CD4-positive, alpha-beta T cell (primary cell): ENCODE measurements at regions of chr10 and their contacts with region 1.

Region 1: DNA sequence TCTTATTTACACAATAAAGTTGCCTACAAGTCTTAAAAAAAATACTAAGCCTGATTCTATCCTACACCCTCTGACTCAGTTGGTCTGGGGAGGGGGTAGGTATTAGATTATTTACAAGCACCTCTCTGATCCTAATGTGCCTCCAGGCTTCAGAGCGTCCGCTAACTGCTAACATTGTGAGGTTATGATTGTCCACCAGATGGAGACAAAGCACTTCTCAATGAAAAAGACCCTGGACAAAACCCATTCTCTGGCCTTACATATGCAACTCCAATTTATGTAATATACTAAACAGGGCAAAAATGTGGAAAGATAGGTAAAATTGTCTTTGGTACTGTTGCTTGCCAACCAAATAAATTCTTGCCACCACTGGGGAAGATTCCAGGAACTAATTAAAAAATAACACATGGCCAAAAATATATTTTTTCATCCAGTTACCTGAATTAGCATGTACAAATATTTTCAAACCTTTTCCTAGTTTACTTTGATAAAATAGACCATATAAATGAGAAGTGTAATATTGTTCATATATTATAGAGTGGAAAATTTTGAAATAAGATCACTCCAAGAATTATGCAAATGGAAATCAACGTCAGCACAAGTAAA is 92.4 kb downstream of the KIF20B start:
- DNase-seq: peak in 8 of 14 experiments; percentile 5 to 77 (median 27)
- ATAC-seq: peak; percentile 52
- H3K4me3 ChIP-seq: no peak overlapping the region
- H3K4me3 Mint-ChIP-seq: no peak overlapping the region
- H3K27ac ChIP-seq: no peak overlapping the region
- H3K27ac Mint-ChIP-seq: no peak overlapping the region
- H3K4me1 ChIP-seq: no peaks in the 10 kb centered on the region
- H3K4me1 Mint-ChIP-seq: no peaks in the 10 kb centered on the region
- H3K27me3 ChIP-seq: peaks cover 0 to 4% of the 10 kb centered on the region in 2 experiments
- H3K27me3 Mint-ChIP-seq: peaks cover 22% of the 10 kb centered on the region
- CTCF ChIP-seq: peak; percentile 85

Region 2: GRCh38 chr10:90592638-90593302 is 799.0 kb after region 1 on chr10:
- CTCF ChIA-PET with region 1: no interaction called
- POLR2A ChIA-PET with region 1: no interaction called
- intact Hi-C with region 1: loop called in 1 of 2 experiments (anchors 10 kb)
- DNase-seq: peak in 1 of 14 experiments; percentile 2
- ATAC-seq: no peak
- H3K4me3 ChIP-seq: no peak overlapping the region
- H3K4me3 Mint-ChIP-seq: no peak overlapping the region
- H3K27ac ChIP-seq: no peak overlapping the region
- H3K27ac Mint-ChIP-seq: no peak overlapping the region
- H3K4me1 ChIP-seq: no peaks in the 10 kb centered on the region
- H3K4me1 Mint-ChIP-seq: no peaks in the 10 kb centered on the region
- H3K27me3 ChIP-seq: no peaks in the 10 kb centered on the region
- H3K27me3 Mint-ChIP-seq: peaks cover 22% of the 10 kb centered on the region
- CTCF ChIP-seq: no peak

Region 3: DNA sequence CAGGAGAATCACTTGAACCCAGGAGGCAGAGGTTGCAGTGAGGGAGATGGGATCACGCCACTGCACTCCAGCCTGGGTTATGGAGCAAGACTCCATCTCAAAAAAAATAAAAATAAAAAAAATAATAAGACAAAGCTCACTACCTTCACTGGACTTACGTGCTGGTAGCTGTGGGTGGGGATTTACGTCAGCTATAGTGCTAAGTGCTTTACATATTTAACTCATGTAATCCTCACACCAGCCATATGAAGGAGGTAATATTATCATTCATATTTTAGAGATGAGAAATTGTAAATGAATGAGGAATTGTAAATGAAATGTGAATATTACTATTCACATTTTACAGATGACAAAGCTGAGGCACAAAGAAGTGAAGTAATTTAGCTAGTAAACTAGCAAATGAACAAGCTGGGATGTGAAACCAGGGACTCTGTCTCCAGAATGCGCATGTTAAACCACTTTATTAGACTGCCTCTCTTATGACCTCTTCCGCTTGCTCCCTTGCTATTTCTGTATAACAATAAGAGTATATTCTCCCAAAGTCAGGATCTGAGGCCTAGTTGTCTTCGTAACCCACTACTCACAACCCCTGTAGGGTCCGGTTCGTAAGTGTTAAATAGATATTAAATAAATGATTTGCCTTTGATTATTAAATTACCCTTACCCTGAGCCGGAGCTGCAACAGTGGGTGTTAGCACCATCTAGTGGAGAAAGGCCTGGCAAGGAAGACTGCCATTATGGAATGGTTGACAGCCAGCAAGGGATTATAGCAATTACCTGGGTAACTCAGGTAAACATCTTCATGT is 993.8 kb after region 1 on chr10:
- CTCF ChIA-PET with region 1: interaction called, 3 read pairs
- POLR2A ChIA-PET with region 1: no interaction called
- intact Hi-C with region 1: loop called (anchors 1 kb)
- DNase-seq: peak in 7 of 14 experiments; percentile 3 to 52 (median 7)
- ATAC-seq: no peak
- H3K4me3 ChIP-seq: no peak overlapping the region
- H3K4me3 Mint-ChIP-seq: no peak overlapping the region
- H3K27ac ChIP-seq: no peak overlapping the region
- H3K27ac Mint-ChIP-seq: no peak overlapping the region
- H3K4me1 ChIP-seq: no peaks in the 10 kb centered on the region
- H3K4me1 Mint-ChIP-seq: no peaks in the 10 kb centered on the region
- H3K27me3 ChIP-seq: peaks cover 0 to 6% of the 10 kb centered on the region in 2 experiments
- H3K27me3 Mint-ChIP-seq: peaks cover 6% of the 10 kb centered on the region
- CTCF ChIP-seq: peak; percentile 53